Panc1 (cell line): ENCODE measurements at regions of chr17 and their contacts with region 1.

Region 1: GRCh38 chr17:75345514-75346167 is 56.4 kb upstream of the SLC25A19 start:
- DNase-seq: no peak
- ATAC-seq: no peak
- H3K4me3 ChIP-seq: no peak overlapping the region
- H3K27ac ChIP-seq: no peak overlapping the region
- H3K4me1 ChIP-seq: peaks cover 11% of the 10 kb centered on the region; the same call in 1 of the 2 replicates
- H3K27me3 ChIP-seq: no peaks in the 10 kb centered on the region
- CTCF ChIP-seq: no peak

Region 2: DNA sequence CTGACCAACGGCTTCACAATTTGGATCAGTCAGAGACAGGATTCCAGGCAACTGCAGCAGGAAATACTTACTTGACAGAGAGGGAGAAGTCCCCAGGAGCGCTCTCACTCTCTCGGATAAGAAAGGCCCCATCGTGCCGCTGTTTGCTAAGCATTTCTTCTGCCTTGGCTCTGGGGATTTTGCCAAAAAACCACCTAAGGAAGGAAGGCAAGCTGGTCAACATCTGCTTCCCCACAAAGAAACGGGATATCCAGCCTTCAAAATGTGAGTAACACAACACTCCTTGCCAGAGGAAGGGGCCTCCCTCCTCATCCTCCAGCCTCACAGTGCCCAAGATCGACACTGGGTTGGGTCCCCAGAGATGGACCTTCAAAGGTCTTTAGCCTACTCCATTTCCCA is 19.8 kb before region 1 on chr17:
- CTCF ChIA-PET with region 1: interaction called, 4 read pairs
- POLR2A ChIA-PET with region 1: interaction called, 13 read pairs
- in situ Hi-C with region 1: no loop called
- intact Hi-C with region 1: no loop called
- DNase-seq: no peak
- ATAC-seq: no peak
- H3K4me3 ChIP-seq: no peak overlapping the region
- H3K27ac ChIP-seq: no peak overlapping the region
- H3K4me1 ChIP-seq: no peaks in the 10 kb centered on the region
- H3K27me3 ChIP-seq: no peaks in the 10 kb centered on the region
- CTCF ChIP-seq: no peak